CD4-positive, alpha-beta memory T cell (primary cell): ENCODE measurements at regions of chr1 and their contacts with region 1.

Region 1: DNA sequence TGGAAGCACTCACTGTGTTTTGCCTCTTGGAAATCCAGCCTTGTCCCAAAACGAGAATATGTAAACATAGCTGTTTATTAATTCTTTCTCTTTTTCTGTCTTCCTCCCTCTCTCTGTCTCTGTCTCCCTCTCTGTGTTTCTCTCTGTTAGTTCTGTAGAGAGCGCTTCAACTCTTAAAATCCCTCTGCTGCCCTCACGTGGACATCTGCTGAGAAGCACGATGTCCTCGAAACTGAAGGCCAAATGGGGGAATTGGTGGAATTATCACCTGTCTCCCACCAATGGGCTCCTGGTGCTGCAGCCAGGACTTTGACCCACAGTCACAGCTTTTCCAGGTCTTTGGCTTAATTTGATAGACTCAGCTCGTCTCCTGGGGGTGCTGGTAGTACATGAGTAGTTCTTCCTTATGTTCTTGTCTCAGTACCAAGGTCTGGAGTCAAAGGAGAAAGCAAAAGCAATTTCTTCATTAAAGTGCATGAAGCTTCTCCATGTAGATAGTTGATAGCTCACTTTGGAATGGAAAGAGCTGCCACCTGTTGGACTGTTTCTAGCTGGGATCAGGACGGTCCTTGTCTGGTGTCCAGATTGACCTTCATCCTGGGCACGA is 5.5 kb upstream of the GBP6 start:
- DNase-seq: peak; percentile 76 to 81 (median 77)
- H3K4me3 ChIP-seq: no peak overlapping the region
- H3K4me3 Mint-ChIP-seq: peak overlapping the region in 5 of 8 donors; percentile 0 to 80 (median 57)
- H3K27ac ChIP-seq: no peak overlapping the region
- H3K27ac Mint-ChIP-seq: peak overlapping the region in 5 of 7 donors; percentile 50 to 66 (median 57)
- H3K4me1 ChIP-seq: peaks cover 27% of the 10 kb centered on the region
- H3K4me1 Mint-ChIP-seq: peaks cover 15 to 29% (median 25%) of the 10 kb centered on the region in 4 donors
- H3K27me3 ChIP-seq: no peaks in the 10 kb centered on the region
- H3K27me3 Mint-ChIP-seq: no peaks in the 10 kb centered on the region

Region 2: DNA sequence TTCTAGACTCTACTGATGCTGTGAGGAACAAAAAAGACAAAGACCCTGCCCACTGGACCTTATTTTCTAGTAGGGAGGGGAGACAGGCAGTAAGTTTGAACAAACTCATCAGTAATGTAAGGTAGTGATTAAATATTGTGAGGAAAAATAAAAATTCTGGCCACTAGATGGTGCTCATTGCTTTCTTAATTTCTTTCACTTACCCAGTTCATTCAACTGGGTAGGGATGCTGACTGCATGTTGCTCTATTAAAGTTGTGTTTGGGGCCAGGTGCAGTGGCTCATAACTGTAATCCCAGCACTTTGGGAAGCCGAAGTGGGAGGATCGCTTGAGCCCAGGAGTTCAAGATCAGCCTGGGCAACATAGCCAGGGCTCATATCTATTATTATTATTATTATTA is 359.7 kb before region 1 on chr1:
- CTCF ChIA-PET with region 1: interaction called, 147 read pairs
- POLR2A ChIA-PET with region 1: interaction called, 5 read pairs
- intact Hi-C with region 1: loop called (anchors 1 kb)
- DNase-seq: peak; percentile 51 to 74 (median 71)
- H3K4me3 ChIP-seq: no peak overlapping the region
- H3K4me3 Mint-ChIP-seq: no peak overlapping the region
- H3K27ac ChIP-seq: no peak overlapping the region
- H3K27ac Mint-ChIP-seq: no peak overlapping the region
- H3K4me1 ChIP-seq: peaks cover 25% of the 10 kb centered on the region
- H3K4me1 Mint-ChIP-seq: peaks cover 20 to 40% (median 30%) of the 10 kb centered on the region in 4 donors
- H3K27me3 ChIP-seq: no peaks in the 10 kb centered on the region
- H3K27me3 Mint-ChIP-seq: no peaks in the 10 kb centered on the region

Region 3: DNA sequence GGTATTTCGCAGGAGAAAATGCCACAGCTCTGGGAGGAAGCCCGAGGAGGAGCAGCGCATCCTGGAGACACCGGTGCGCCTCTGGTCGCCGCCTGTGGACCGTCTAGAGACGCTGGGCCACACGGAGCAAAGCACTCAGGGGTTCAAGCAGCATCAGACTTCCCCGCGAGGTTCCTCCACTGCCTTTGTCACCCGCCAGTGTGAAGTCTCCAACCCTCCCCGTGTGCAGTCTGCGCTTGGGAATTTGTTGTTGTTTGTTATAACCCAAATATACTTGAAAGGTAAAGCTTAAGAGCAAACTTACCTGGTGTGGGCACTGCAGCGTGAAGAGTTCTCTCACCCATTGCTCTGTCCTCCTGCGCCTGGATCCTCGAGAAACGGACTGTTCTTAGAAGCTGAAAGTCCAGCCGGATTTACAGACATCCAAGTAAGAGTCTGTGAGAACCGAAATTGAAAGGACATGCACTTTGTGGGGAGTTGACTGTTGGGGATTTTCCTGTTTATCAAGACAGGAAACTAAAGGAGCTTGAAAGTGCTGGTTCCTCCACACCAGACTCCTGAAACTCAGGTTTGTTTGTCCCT is 159.8 kb before region 1 on chr1 and contains the start of gene GBP4:
- CTCF ChIA-PET with region 1: interaction called, 25 read pairs
- POLR2A ChIA-PET with region 1: interaction called, 7 read pairs
- intact Hi-C with region 1: loop called (anchors 1 kb)
- DNase-seq: peak; percentile 36 to 58 (median 45)
- H3K4me3 ChIP-seq: peak within 1 kb of the TSS; percentile 80
- H3K4me3 Mint-ChIP-seq: peak within 1 kb of the TSS; percentile 96 to 99 (median 98)
- H3K27ac ChIP-seq: peak within 1 kb of the TSS; percentile 85
- H3K27ac Mint-ChIP-seq: peak within 1 kb of the TSS; percentile 94 to 99 (median 95)
- H3K4me1 ChIP-seq: peaks cover 60% of the 10 kb centered on the region
- H3K4me1 Mint-ChIP-seq: peaks cover 48 to 88% (median 63%) of the 10 kb centered on the region in 4 donors
- H3K27me3 ChIP-seq: no peaks in the 10 kb centered on the region
- H3K27me3 Mint-ChIP-seq: no peaks in the 10 kb centered on the region
- total RNA-seq, gene GBP4: 48.5 to 49.5 TPM

Region 4: GRCh38 chr1:89310505-89310904 is 47.9 kb before region 1 on chr1:
- CTCF ChIA-PET with region 1: interaction called, 22 read pairs
- POLR2A ChIA-PET with region 1: interaction called, 3 read pairs
- intact Hi-C with region 1: loop called (anchors 5 kb)
- DNase-seq: peak in 3 of 5 donors; percentile 17 to 27 (median 18)
- H3K4me3 ChIP-seq: peak overlapping the region in 1 of 2 donors; percentile 7
- H3K4me3 Mint-ChIP-seq: peak overlapping the region; percentile 37 to 84 (median 70)
- H3K27ac ChIP-seq: no peak overlapping the region
- H3K27ac Mint-ChIP-seq: peak overlapping the region; percentile 62 to 94 (median 81)
- H3K4me1 ChIP-seq: peaks cover 62% of the 10 kb centered on the region
- H3K4me1 Mint-ChIP-seq: peaks cover 30 to 66% (median 47%) of the 10 kb centered on the region in 4 donors
- H3K27me3 ChIP-seq: no peaks in the 10 kb centered on the region
- H3K27me3 Mint-ChIP-seq: no peaks in the 10 kb centered on the region

Region 5: DNA sequence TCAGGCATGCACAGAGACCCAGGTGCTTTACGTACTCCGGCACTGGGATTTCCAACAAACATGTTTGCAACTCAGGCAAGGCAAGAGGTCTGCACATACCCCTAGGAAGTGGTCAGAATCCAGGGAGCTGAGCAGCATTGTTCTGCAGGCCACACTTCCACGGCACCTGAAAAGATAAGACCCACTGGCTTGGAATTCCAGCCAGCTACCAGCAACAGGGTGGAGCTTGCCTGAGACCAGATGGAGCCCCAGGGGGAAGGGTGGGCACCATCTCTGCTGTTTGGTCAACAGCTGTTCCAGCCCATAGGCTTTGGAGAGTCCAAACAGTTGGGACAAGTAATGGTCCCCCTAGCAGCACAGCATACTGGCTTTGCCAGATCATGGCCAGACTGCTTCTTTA is 114.6 kb after region 1 on chr1:
- CTCF ChIA-PET with region 1: no interaction called
- POLR2A ChIA-PET with region 1: no interaction called
- intact Hi-C with region 1: no loop called
- DNase-seq: no peak
- H3K4me3 ChIP-seq: no peak overlapping the region
- H3K4me3 Mint-ChIP-seq: no peak overlapping the region
- H3K27ac ChIP-seq: no peak overlapping the region
- H3K27ac Mint-ChIP-seq: no peak overlapping the region
- H3K4me1 ChIP-seq: no peaks in the 10 kb centered on the region
- H3K4me1 Mint-ChIP-seq: peaks cover 2 to 9% (median 6%) of the 10 kb centered on the region in 4 donors
- H3K27me3 ChIP-seq: no peaks in the 10 kb centered on the region
- H3K27me3 Mint-ChIP-seq: peaks cover 4 to 6% of the 10 kb centered on the region in 2 donors